ENCODE measurements at regions of chr11 and their contacts with region 1.

Region 1: DNA sequence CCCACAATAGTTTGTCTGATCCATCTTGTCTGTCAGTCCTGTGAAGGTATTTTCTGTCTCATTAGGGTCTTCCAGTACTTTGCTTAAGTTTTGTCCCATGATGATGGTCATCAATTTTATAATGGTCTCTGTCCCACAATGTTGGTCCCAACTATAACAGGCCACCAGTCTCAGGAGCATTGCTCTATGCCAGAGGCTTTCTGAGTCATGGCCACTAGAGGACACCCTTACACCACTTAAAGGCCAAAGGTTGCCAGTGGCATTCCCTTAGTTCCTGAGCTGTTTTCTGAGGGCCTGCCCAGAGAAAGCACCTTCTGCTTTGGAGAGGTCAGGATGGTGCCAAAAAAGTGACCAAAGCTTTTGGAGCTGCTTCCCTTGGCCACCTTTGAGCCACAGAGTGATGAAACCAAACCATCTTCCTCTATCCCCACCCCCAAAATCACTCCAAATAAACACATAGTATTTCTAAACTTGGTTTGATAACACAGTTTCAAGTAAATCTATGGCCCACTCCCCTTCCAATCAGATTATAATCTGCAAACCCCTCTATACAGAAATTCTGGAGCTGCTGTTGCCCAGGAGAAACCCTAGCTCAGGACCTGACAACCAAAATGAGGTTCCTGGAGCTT is 19.3 kb downstream of the EIF3F start:
- DNase-seq: peak; percentile 53
- H3K4me3 ChIP-seq: no peak overlapping the region
- H3K27ac ChIP-seq: no peak overlapping the region
- H3K4me1 ChIP-seq: no peaks in the 10 kb centered on the region
- H3K27me3 ChIP-seq: no peaks in the 10 kb centered on the region
- CTCF ChIP-seq: peak; percentile 93 to 95

Region 2: GRCh38 chr11:7927635-7928034 is 78.8 kb before region 1 on chr11:
- CTCF ChIA-PET with region 1: no interaction called
- dilution Hi-C with region 1: no loop called
- in situ Hi-C with region 1: no loop called
- intact Hi-C with region 1: no loop called
- DNase-seq: peak; percentile 76
- H3K4me3 ChIP-seq: no peak overlapping the region
- H3K27ac ChIP-seq: no peak overlapping the region
- H3K4me1 ChIP-seq: no peaks in the 10 kb centered on the region
- H3K27me3 ChIP-seq: no peaks in the 10 kb centered on the region
- CTCF ChIP-seq: no peak

Region 3: GRCh38 chr11:8033305-8034105 is 27.0 kb after region 1 on chr11:
- CTCF ChIA-PET with region 1: interaction called, 3 read pairs
- dilution Hi-C with region 1: no loop called
- in situ Hi-C with region 1: no loop called
- intact Hi-C with region 1: loop called (anchors 1 kb)
- DNase-seq: peak; percentile 56
- H3K4me3 ChIP-seq: no peak overlapping the region
- H3K27ac ChIP-seq: no peak overlapping the region
- H3K4me1 ChIP-seq: no peaks in the 10 kb centered on the region
- H3K27me3 ChIP-seq: no peaks in the 10 kb centered on the region
- CTCF ChIP-seq: peak; percentile 85 to 95

Region 4: GRCh38 chr11:8080674-8081590 is 74.5 kb after region 1 on chr11 and contains the start of gene TUB:
- CTCF ChIA-PET with region 1: no interaction called
- dilution Hi-C with region 1: loop called (anchors 5 kb)
- in situ Hi-C with region 1: loop called in 1 of 2 experiments (anchors 10 kb)
- intact Hi-C with region 1: no loop called
- DNase-seq: no peak
- H3K4me3 ChIP-seq: peak within 1 kb of the TSS in 2 of 3 experiments; percentile 45 to 51
- H3K27ac ChIP-seq: no peak within 1 kb of the TSS
- H3K4me1 ChIP-seq: peaks cover 9% of the 10 kb centered on the region
- H3K27me3 ChIP-seq: peaks cover 6% of the 10 kb centered on the region
- CTCF ChIP-seq: no peak
- total RNA-seq, gene TUB: 3.8 to 4.8 TPM

Region 5: GRCh38 chr11:8092587-8093424 is 86.3 kb after region 1 on chr11:
- CTCF ChIA-PET with region 1: interaction called, 10 read pairs
- dilution Hi-C with region 1: loop called (anchors 5 kb)
- in situ Hi-C with region 1: loop called (anchors 5 to 10 kb)
- intact Hi-C with region 1: loop called (anchors 1 kb)
- DNase-seq: peak; percentile 48
- H3K4me3 ChIP-seq: no peak overlapping the region
- H3K27ac ChIP-seq: no peak overlapping the region
- H3K4me1 ChIP-seq: no peaks in the 10 kb centered on the region
- H3K27me3 ChIP-seq: no peaks in the 10 kb centered on the region
- CTCF ChIP-seq: peak; percentile 80 to 84

Region 6: GRCh38 chr11:8225589-8226036 is 219.2 kb after region 1 on chr11:
- CTCF ChIA-PET with region 1: no interaction called
- dilution Hi-C with region 1: no loop called
- in situ Hi-C with region 1: no loop called
- intact Hi-C with region 1: loop called (anchors 10 kb)
- DNase-seq: no peak
- H3K4me3 ChIP-seq: no peak overlapping the region
- H3K27ac ChIP-seq: no peak overlapping the region
- H3K4me1 ChIP-seq: peaks cover 39% of the 10 kb centered on the region
- H3K27me3 ChIP-seq: no peaks in the 10 kb centered on the region
- CTCF ChIP-seq: peak; percentile 63 to 93